Activated CD4-positive, alpha-beta memory T cell treated with anti-CD3 and anti-CD28 coated beads for 36 hours (primary cell): ENCODE measurements at regions of chr4 and their contacts with region 1.

Region 1: GRCh38 chr4:121656269-121656641 is 40.5 kb downstream of the ANXA5 start:
- DNase-seq: peak; percentile 42
- H3K4me3 Mint-ChIP-seq: no peak overlapping the region
- H3K27ac Mint-ChIP-seq: no peak overlapping the region
- H3K4me1 Mint-ChIP-seq: no peaks in the 10 kb centered on the region
- H3K27me3 Mint-ChIP-seq: no peaks in the 10 kb centered on the region

Region 2: GRCh38 chr4:121353213-121353612 is 303.0 kb before region 1 on chr4:
- CTCF ChIA-PET with region 1: no interaction called
- POLR2A ChIA-PET with region 1: no interaction called
- intact Hi-C with region 1: no loop called
- DNase-seq: no peak
- H3K4me3 Mint-ChIP-seq: no peak overlapping the region
- H3K27ac Mint-ChIP-seq: no peak overlapping the region
- H3K4me1 Mint-ChIP-seq: no peaks in the 10 kb centered on the region
- H3K27me3 Mint-ChIP-seq: peaks cover 35% of the 10 kb centered on the region

Region 3: GRCh38 chr4:121462660-121463261 is 193.5 kb before region 1 on chr4:
- CTCF ChIA-PET with region 1: interaction called, 8 read pairs
- POLR2A ChIA-PET with region 1: no interaction called
- intact Hi-C with region 1: loop called (anchors 1 kb)
- DNase-seq: peak; percentile 35
- H3K4me3 Mint-ChIP-seq: no peak overlapping the region
- H3K27ac Mint-ChIP-seq: no peak overlapping the region
- H3K4me1 Mint-ChIP-seq: no peaks in the 10 kb centered on the region
- H3K27me3 Mint-ChIP-seq: peaks cover 26% of the 10 kb centered on the region

Region 4: GRCh38 chr4:121472937-121473721 is 183.1 kb before region 1 on chr4:
- CTCF ChIA-PET with region 1: no interaction called
- POLR2A ChIA-PET with region 1: no interaction called
- intact Hi-C with region 1: no loop called
- DNase-seq: no peak
- H3K4me3 Mint-ChIP-seq: no peak overlapping the region
- H3K27ac Mint-ChIP-seq: no peak overlapping the region
- H3K4me1 Mint-ChIP-seq: peaks cover 3% of the 10 kb centered on the region
- H3K27me3 Mint-ChIP-seq: peaks cover 2% of the 10 kb centered on the region

Region 5: DNA sequence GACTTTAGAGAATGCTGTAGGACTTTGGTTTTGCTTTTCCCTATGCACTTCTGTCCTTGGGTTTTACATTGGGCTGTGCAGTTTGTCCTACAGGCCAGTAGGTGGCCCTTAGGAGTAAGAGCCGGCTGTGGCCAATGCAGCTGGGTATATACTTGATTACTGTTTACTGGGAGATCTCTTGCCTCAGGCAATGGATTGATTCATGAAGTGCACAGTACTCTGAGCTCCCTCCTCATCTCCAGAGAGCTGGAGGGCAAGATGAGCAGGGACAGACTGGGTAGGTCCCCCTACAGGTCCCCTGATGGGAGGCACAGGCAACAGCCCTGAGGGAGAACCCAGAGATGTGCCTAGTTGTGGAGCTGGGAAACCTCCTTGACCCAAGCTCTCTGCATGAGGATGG is 171.6 kb before region 1 on chr4:
- CTCF ChIA-PET with region 1: interaction called, 14 read pairs
- POLR2A ChIA-PET with region 1: interaction called, 3 read pairs
- intact Hi-C with region 1: loop called (anchors 2 kb)
- DNase-seq: peak; percentile 31
- H3K4me3 Mint-ChIP-seq: no peak overlapping the region
- H3K27ac Mint-ChIP-seq: no peak overlapping the region
- H3K4me1 Mint-ChIP-seq: no peaks in the 10 kb centered on the region
- H3K27me3 Mint-ChIP-seq: peaks cover 25% of the 10 kb centered on the region